Activated CD4-positive, alpha-beta T cell treated with anti-CD3 and anti-CD28 coated beads for 36 hours (primary cell): ENCODE measurements at regions of chr1 and their contacts with region 1.

Region 1: GRCh38 chr1:112390775-112391602 is 5.0 kb upstream of the CTTNBP2NL start:
- DNase-seq: peak; percentile 89
- ATAC-seq: peak; percentile 76
- H3K4me3 Mint-ChIP-seq: peak overlapping the region; percentile 70
- H3K27ac Mint-ChIP-seq: no peak overlapping the region
- H3K4me1 Mint-ChIP-seq: peaks cover 32% of the 10 kb centered on the region
- H3K27me3 Mint-ChIP-seq: peaks cover 22% of the 10 kb centered on the region

Region 2: GRCh38 chr1:112285746-112286145 is 105.2 kb before region 1 on chr1:
- CTCF ChIA-PET with region 1: no interaction called
- POLR2A ChIA-PET with region 1: no interaction called
- intact Hi-C with region 1: no loop called
- DNase-seq: no peak
- ATAC-seq: no peak
- H3K4me3 Mint-ChIP-seq: no peak overlapping the region
- H3K27ac Mint-ChIP-seq: no peak overlapping the region
- H3K4me1 Mint-ChIP-seq: no peaks in the 10 kb centered on the region
- H3K27me3 Mint-ChIP-seq: peaks cover 32% of the 10 kb centered on the region

Region 3: GRCh38 chr1:112317140-112317539 is 73.8 kb before region 1 on chr1:
- CTCF ChIA-PET with region 1: no interaction called
- POLR2A ChIA-PET with region 1: no interaction called
- intact Hi-C with region 1: no loop called
- DNase-seq: no peak
- ATAC-seq: no peak
- H3K4me3 Mint-ChIP-seq: no peak overlapping the region
- H3K27ac Mint-ChIP-seq: no peak overlapping the region
- H3K4me1 Mint-ChIP-seq: no peaks in the 10 kb centered on the region
- H3K27me3 Mint-ChIP-seq: peaks cover 4% of the 10 kb centered on the region

Region 4: GRCh38 chr1:112466078-112466660 is 75.2 kb after region 1 on chr1:
- CTCF ChIA-PET with region 1: interaction called, 58 read pairs
- POLR2A ChIA-PET with region 1: interaction called, 3 read pairs
- intact Hi-C with region 1: loop called (anchors 1 kb)
- DNase-seq: peak; percentile 93
- ATAC-seq: peak; percentile 97
- H3K4me3 Mint-ChIP-seq: peak overlapping the region; percentile 67
- H3K27ac Mint-ChIP-seq: peak overlapping the region; percentile 83
- H3K4me1 Mint-ChIP-seq: peaks cover 12% of the 10 kb centered on the region
- H3K27me3 Mint-ChIP-seq: peaks cover 15% of the 10 kb centered on the region

Region 5: DNA sequence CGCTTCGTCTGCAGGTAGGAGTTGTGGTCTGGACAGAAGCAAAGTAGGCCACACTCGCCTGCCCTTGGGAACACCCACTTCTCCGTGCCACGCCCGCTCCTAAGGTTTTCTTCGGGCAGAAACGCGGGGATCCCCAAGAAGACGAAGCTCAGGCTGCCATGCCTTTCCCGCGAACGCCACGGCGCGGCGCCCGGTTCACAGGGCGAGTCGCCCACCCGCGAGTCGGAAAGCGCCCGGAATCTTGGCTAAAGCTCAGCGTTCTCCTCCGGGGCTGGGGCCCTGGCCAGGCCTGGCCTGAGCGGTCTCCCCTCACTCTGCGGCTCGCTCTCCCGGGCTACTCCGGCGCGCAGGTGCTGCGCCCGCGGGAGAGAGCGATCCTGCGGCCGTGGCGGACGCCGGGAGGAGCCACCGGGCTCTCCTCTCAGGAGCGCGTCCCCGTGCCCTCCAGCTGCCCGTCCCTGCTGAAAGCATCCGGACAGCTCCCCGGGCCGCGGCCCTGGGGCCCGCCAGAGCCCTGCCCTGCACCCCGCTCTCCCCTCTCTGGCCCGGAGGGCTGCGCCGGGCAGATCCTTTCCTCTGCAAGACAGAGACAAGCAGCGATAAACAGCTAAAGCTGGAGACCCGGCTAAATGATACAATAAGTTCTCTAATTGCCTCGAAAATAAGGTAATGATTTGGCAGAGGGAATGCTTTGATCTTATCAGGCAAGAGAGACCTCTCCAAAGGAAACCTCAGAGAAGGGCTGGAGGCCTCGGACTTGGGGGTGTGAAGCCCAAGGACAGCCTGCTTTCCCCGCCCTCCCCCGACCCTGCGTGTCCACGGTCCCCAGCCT is 111.0 kb after region 1 on chr1:
- CTCF ChIA-PET with region 1: interaction called, 16 read pairs
- POLR2A ChIA-PET with region 1: no interaction called
- intact Hi-C with region 1: no loop called
- DNase-seq: peak; percentile 77
- ATAC-seq: peak; percentile 79
- H3K4me3 Mint-ChIP-seq: peak overlapping the region; percentile 26
- H3K27ac Mint-ChIP-seq: no peak overlapping the region
- H3K4me1 Mint-ChIP-seq: peaks cover 4% of the 10 kb centered on the region
- H3K27me3 Mint-ChIP-seq: peaks cover 49% of the 10 kb centered on the region

Region 6: DNA sequence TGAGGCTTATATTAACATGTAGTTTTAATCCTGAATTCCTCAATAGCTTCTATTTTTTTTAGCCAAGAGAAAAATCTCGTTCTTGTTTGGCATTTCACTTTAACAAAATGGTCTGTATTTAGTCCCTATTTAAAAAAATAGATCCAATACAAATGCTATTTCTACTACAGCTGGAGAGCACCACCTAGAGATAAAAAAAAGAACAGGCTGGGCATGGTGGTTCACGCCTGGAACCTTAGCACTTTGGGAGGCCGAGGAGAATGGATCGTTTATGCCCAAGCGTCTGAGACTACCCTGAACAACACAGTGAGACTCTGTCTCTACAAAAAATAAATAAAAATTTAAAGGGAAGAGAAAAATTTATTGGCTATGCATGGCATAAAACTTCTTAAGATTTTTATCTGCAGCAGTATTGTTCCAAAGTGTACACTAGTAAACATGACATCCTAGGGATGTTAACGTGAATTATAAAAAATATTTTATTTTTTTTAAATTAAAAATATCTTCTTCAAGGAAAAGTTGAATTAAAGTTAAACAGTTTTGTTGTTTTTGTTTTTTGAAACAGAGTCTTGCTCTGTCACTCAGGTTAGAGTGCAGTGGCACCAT is 223.6 kb after region 1 on chr1:
- CTCF ChIA-PET with region 1: interaction called, 16 read pairs
- POLR2A ChIA-PET with region 1: interaction called, 3 read pairs
- intact Hi-C with region 1: loop called (anchors 1 to 2 kb)
- DNase-seq: peak; percentile 33
- ATAC-seq: no peak
- H3K4me3 Mint-ChIP-seq: no peak overlapping the region
- H3K27ac Mint-ChIP-seq: no peak overlapping the region
- H3K4me1 Mint-ChIP-seq: peaks cover 9% of the 10 kb centered on the region
- H3K27me3 Mint-ChIP-seq: no peaks in the 10 kb centered on the region

Region 7: DNA sequence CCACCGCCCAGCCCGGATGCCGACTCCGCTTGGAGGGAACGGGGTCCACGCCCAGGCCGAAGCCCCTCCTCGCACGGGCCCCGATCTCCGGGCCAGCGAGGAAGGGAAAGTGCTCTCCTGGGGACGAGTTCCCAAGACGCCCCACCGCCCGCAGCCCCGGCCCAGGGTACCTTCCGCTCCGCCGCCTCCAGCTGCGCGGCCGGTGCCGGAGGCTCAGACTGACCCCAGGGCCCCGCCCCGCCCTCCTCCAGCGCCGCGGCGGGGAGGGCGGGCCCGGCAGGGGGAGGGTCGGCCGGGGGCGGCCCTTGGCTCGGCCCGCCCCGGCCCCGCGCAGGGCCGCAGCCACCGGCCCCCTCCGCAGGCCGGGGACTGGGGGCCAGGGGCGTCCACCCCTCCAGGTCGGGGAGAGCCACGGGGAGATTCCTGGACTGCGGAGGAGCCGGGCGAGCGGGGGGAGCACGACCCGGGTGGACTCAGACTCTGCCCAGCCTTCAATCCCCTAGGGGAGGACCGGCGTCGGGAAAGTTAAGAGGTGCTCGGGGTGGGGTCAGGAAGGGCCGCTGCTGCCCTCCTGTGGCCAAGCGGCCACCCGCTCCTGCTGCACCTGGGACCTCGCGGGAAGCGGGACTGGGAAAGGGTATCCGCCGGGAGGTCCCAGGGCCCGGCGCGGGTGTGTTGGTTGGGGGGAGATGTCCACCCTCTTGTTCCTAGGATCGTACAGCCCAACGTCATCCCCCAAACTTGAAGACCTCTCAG is 316.1 kb after region 1 on chr1 and contains the start of gene RHOC:
- CTCF ChIA-PET with region 1: interaction called, 17 read pairs
- POLR2A ChIA-PET with region 1: interaction called, 4 read pairs
- intact Hi-C with region 1: loop called (anchors 1 to 2 kb)
- DNase-seq: peak; percentile 85
- ATAC-seq: peak; percentile 43
- H3K4me3 Mint-ChIP-seq: peak within 1 kb of the TSS; percentile 58
- H3K27ac Mint-ChIP-seq: peak within 1 kb of the TSS; percentile 45
- H3K4me1 Mint-ChIP-seq: peaks cover 48% of the 10 kb centered on the region
- H3K27me3 Mint-ChIP-seq: peaks cover 2% of the 10 kb centered on the region
- total RNA-seq, gene RHOC: 32.8 to 45.7 TPM

Region 8: DNA sequence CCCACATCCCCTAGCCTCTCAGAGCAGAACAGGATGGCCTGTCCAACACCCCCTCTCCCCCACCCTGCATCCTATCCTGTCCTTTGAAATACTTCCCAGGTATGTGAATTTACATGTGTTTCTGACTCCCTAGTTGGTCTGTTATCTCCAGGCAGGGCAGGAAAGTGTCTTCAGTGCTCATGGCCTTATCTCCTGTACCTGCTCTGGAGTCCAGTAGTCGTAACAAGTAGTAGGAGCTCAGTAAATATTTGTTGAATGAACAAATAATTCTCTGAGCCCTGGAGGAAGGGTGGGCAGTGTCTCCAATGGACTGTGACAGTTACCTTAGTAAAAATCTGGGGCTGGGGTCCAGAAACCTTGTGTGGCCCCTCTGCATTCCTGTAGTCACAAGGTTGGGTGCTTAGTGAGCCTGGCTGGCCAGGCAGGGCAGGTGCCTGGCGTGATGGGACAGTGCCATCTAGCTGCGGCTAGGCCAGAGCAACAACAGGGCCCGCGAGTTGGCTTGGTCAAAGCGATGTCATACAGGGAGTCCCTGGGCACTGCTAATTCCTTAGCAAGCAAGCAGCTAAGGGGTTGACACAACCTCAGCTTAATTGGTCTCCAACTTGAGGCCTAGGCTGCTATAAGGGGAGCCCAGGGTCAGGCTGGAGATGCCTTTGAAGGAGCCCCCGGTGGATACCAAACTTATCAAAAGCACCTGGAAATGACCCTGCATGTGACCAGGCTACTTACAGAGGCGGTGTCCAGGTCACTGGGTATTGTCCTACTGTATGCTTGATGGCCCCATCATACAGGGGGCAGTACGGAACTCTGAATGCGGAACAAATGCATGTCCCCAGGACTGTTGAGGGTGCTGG is 413.1 kb after region 1 on chr1:
- CTCF ChIA-PET with region 1: no interaction called
- POLR2A ChIA-PET with region 1: no interaction called
- intact Hi-C with region 1: loop called (anchors 2 to 10 kb)
- DNase-seq: peak; percentile 81
- ATAC-seq: peak; percentile 97
- H3K4me3 Mint-ChIP-seq: no peak overlapping the region
- H3K27ac Mint-ChIP-seq: no peak overlapping the region
- H3K4me1 Mint-ChIP-seq: no peaks in the 10 kb centered on the region
- H3K27me3 Mint-ChIP-seq: peaks cover 5% of the 10 kb centered on the region